HCT116 (cell line): ENCODE measurements at regions of chr10 and their contacts with region 1.

Region 1: DNA sequence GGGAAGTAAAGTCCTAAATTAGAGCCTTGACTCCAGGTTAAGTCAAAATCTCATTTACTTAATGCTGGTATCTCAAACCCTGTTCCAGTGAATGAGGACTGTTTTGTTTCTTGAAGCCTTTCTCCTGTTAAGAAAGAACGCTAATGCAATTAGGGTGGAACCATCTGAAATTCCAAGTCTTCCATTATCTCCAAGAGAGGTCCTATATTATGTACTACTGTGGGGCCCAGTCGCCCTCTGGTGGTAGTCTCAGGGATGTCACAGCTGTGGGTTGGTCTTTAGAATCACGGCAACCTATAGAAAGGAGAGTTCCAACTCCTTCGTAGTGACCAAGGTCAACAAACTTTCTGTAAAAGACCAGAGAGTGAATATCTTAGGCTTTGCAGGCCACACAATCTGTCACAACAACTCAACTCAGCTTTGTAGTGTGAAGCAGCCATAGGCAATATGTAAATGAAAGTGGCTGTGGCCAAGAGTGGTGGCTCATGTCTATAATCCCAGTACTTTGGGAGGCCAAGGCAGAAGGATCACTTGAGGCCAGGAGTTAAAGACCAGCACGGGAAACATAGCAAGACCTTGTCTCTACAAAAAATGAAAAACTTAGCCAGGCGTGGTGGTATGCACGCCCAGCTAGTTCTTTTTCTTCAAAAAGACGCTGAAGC is 9.3 kb downstream of the RPP38 start:
- DNase-seq: peak; percentile 50
- ATAC-seq: peak; percentile 99
- H3K4me3 ChIP-seq: no peak overlapping the region
- H3K27ac ChIP-seq: no peak overlapping the region
- H3K4me1 ChIP-seq: no peaks in the 10 kb centered on the region
- H3K27me3 ChIP-seq: no peaks in the 10 kb centered on the region
- CTCF ChIP-seq: peak; percentile 84 to 99 (median 96)
- POLR2A ChIP-seq: no peak
- RAD21 ChIP-seq: peak; percentile 92

Region 2: GRCh38 chr10:14499601-14499904 is 606.9 kb before region 1 on chr10:
- CTCF ChIA-PET with region 1: no interaction called
- POLR2A ChIA-PET with region 1: no interaction called
- RAD21 ChIA-PET with region 1: no interaction called
- intact Hi-C with region 1: loop called (anchors 2 kb)
- DNase-seq: no peak
- ATAC-seq: no peak
- H3K4me3 ChIP-seq: no peak overlapping the region
- H3K27ac ChIP-seq: no peak overlapping the region
- H3K4me1 ChIP-seq: no peaks in the 10 kb centered on the region
- H3K27me3 ChIP-seq: peaks cover 9% of the 10 kb centered on the region
- CTCF ChIP-seq: no peak
- POLR2A ChIP-seq: no peak
- RAD21 ChIP-seq: no peak

Region 3: DNA sequence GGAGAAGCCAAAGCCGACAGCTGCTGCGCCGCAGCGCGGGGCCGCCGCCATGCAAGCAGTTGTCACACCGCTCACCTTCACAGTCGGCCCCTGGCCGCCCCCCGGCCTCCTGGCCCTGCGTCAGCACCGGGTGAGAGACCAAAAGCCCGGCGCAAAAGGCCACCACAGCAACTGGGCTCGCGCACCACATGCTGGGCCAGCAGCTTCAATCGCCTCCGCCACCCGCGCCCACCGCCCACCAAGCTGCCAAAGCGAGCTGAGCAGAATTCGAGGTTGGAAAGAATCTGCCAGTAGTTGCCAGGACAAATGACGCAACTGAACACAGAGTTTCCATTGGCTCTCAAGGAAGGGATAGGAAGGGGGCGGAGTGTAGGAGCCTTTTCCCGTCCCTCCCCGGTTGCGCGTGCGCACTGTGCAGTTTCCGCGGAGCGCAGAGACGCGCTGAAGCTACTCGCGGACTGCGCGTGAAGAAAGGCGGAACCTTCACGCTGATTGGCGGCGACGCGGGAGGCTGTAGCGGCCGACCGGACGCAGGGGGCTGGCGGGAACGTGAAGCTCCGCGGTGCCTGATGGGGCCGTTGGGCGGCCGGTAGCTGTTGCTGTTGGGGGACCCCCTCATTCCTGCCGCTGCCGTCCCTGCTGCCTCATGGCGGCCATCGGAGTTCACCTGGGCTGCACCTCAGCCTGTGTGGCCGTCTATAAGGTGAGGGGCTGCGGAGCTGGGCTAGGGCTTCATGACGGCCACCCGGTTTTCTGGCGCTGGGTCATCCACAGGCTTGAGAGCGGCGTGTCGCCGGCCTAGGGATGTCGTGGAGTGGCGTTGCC is 268.5 kb before region 1 on chr10 and contains the starts of genes CDNF, HSPA14 and MSANTD7:
- CTCF ChIA-PET with region 1: interaction called, 5 read pairs
- POLR2A ChIA-PET with region 1: no interaction called
- RAD21 ChIA-PET with region 1: no interaction called
- intact Hi-C with region 1: loop called (anchors 2 kb)
- DNase-seq: peak; percentile 98
- ATAC-seq: peak; percentile 94
- H3K4me3 ChIP-seq: peak within 1 kb of the TSS; percentile 84 to 93
- H3K27ac ChIP-seq: peak within 1 kb of the TSS; percentile 83
- H3K4me1 ChIP-seq: peaks cover 2 to 20% of the 10 kb centered on the region in 2 experiments; a peak in 3 of 4 replicates
- H3K27me3 ChIP-seq: no peaks in the 10 kb centered on the region
- CTCF ChIP-seq: no peak
- POLR2A ChIP-seq: peak; percentile 75
- RAD21 ChIP-seq: no peak
- total RNA-seq, gene CDNF: 1.1 TPM
- total RNA-seq, gene HSPA14: 19.9 TPM
- total RNA-seq, gene MSANTD7: 14.3 TPM

Region 4: DNA sequence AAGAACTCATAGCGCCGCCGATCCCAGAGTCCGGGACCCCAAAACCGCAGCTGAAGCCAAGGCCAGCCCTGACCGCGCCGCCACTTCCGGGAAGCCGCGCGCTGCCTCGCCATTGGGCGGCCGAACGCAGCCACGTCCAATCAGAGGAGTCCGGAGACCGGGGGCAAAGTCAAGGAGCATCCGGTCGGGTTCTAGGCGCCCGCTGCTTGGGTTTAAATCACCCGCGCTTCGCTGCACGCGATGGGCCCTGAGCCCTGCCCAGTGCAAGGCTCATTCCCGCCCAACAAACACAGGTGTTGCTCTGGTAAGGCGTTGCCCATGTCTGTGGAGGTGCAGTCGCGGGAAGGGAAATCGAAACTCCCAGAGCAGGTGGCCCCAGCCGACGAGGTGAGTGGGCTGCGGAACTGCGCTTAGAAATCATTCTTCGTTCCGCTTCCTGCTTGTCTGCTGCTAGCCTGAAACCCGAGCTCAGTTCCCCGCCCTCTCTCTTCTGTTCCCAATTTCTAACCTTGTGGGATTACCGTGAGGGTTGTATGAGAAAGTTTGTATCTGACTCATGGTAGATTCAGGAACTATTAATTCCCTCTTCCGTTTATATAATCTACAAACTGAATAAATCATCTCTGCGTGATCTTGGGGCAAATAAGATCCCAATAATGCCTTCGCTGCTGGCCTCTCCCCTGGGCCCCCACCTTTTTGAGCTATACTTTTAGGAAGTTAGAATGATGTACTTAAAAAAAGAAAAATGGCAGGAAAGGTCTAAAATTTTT is 152.3 kb before region 1 on chr10 and contains the start of gene DCLRE1C:
- CTCF ChIA-PET with region 1: interaction called, 9 read pairs
- POLR2A ChIA-PET with region 1: no interaction called
- RAD21 ChIA-PET with region 1: no interaction called
- intact Hi-C with region 1: loop called (anchors 5 kb)
- DNase-seq: peak; percentile 80
- ATAC-seq: peak; percentile 93
- H3K4me3 ChIP-seq: peak within 1 kb of the TSS; percentile 76 to 82
- H3K27ac ChIP-seq: peak within 1 kb of the TSS; percentile 70
- H3K4me1 ChIP-seq: peaks cover 13 to 23% of the 10 kb centered on the region in 2 experiments
- H3K27me3 ChIP-seq: no peaks in the 10 kb centered on the region
- CTCF ChIP-seq: no peak
- POLR2A ChIP-seq: peak; percentile 86
- RAD21 ChIP-seq: no peak
- total RNA-seq, gene DCLRE1C: 14.5 TPM

Region 5: DNA sequence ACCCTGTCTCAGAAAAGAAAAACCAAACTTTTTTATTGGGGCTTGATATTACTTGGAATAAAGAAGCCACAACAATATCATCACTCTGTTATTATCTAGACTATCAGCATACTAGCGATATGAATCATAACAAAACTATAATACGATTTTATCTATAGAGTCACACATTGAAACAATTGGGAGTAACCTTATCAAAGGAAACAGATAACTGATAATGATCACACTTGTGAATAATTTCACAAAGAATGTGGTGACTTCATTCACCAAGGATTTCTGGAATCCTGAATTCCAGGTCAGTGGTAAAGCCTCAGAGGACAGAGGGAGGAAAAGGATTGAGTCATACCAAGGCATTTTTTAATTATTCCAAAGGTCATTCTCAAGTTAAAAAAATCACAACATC is 94.1 kb after region 1 on chr10:
- CTCF ChIA-PET with region 1: no interaction called
- POLR2A ChIA-PET with region 1: no interaction called
- RAD21 ChIA-PET with region 1: no interaction called
- intact Hi-C with region 1: loop called (anchors 1 kb)
- DNase-seq: peak; percentile 90
- ATAC-seq: peak; percentile 79
- H3K4me3 ChIP-seq: peak overlapping the region in 1 of 2 experiments; percentile 36; a peak in 1 of 4 replicates
- H3K27ac ChIP-seq: peak overlapping the region; percentile 91; the same call in 1 of the 2 replicates
- H3K4me1 ChIP-seq: peaks cover 46 to 88% of the 10 kb centered on the region in 2 experiments
- H3K27me3 ChIP-seq: no peaks in the 10 kb centered on the region
- CTCF ChIP-seq: no peak
- POLR2A ChIP-seq: no peak
- RAD21 ChIP-seq: peak; percentile 20; the same call in 1 of the 2 replicates

Region 6: GRCh38 chr10:15515202-15515601 is 408.7 kb after region 1 on chr10:
- CTCF ChIA-PET with region 1: no interaction called
- POLR2A ChIA-PET with region 1: no interaction called
- RAD21 ChIA-PET with region 1: no interaction called
- intact Hi-C with region 1: no loop called
- DNase-seq: no peak
- ATAC-seq: no peak
- H3K4me3 ChIP-seq: no peak overlapping the region
- H3K27ac ChIP-seq: no peak overlapping the region
- H3K4me1 ChIP-seq: peaks cover 0 to 4% of the 10 kb centered on the region in 2 experiments; a peak in 1 of 4 replicates
- H3K27me3 ChIP-seq: peaks cover 24% of the 10 kb centered on the region; the same call in 1 of the 2 replicates
- CTCF ChIP-seq: no peak
- POLR2A ChIP-seq: no peak
- RAD21 ChIP-seq: no peak